WTC11 (cell line): ENCODE measurements at regions of chr19 and their contacts with region 1.

Region 1: GRCh38 chr19:45125926-45126493 is 33.0 kb downstream of the PPP1R37 start:
- DNase-seq: peak; percentile 90
- ATAC-seq: peak; percentile 93
- H3K4me3 Mint-ChIP-seq: no peak overlapping the region
- H3K27ac Mint-ChIP-seq: peak overlapping the region; percentile 19; the same call in 1 of the 2 replicates
- H3K4me1 Mint-ChIP-seq: peaks cover 16% of the 10 kb centered on the region
- H3K27me3 Mint-ChIP-seq: no peaks in the 10 kb centered on the region
- CTCF ChIP-seq: peak; percentile 76

Region 2: DNA sequence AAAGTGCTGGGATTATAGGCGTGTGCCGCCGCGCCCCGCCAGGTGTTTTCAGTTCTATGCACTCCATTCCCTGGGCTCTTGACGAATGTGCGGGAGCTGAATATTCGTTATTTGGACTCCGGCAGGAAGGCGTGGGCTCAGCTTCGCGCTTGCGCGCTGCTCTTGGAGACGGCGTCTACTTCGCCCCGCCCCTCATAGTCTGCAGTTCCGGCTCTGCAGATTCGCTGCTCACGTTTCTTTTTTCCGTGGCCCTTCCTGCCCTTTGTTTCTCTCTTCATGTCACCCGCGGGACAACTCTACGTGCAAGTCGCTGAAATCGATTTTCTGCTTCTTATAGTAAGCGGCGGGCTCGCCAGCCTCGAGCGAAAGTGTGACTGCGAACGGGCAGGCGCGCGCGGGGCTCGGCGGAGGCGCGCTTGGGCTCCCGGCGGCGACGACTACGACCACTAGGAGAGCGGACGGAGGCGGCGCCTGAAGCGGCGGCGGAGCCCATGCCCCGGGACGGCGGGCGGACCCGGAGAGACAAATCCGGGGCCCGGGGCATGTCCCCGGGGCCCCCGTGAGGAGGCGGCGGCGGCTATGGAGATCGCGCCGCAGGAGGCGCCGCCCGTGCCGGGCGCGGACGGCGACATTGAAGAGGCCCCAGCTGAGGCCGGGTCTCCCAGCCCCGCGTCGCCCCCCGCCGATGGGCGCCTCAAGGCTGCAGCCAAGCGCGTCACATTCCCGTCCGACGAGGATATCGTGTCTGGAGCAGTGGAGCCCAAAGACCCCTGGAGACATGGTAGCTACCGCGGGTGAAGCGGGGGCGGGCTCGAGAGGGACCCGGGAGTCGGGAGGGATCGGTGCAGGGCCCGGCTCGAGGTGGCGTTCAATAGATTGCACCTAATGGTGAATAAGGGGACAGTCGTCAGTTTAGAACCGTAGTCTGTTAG is 33.0 kb before region 1 on chr19 and contains the start of gene PPP1R37:
- CTCF ChIA-PET with region 1: interaction called, 14 read pairs
- POLR2A ChIA-PET with region 1: no interaction called
- DNase-seq: peak; percentile 93
- ATAC-seq: peak; percentile 52
- H3K4me3 Mint-ChIP-seq: peak within 1 kb of the TSS; percentile 84
- H3K27ac Mint-ChIP-seq: peak within 1 kb of the TSS; percentile 100
- H3K4me1 Mint-ChIP-seq: peaks cover 57% of the 10 kb centered on the region
- H3K27me3 Mint-ChIP-seq: no peaks in the 10 kb centered on the region
- CTCF ChIP-seq: no peak
- total RNA-seq, gene PPP1R37: 34.5 to 35.9 TPM (median 35.4 TPM) in 3 replicates

Region 3: GRCh38 chr19:45113616-45114015 is 12.4 kb before region 1 on chr19:
- CTCF ChIA-PET with region 1: interaction called, 17 read pairs
- POLR2A ChIA-PET with region 1: no interaction called
- DNase-seq: no peak
- ATAC-seq: no peak
- H3K4me3 Mint-ChIP-seq: no peak overlapping the region
- H3K27ac Mint-ChIP-seq: peak overlapping the region; percentile 36; the same call in 1 of the 2 replicates
- H3K4me1 Mint-ChIP-seq: peaks cover 10% of the 10 kb centered on the region; the same call in 1 of the 2 replicates
- H3K27me3 Mint-ChIP-seq: no peaks in the 10 kb centered on the region
- CTCF ChIP-seq: no peak

Region 4: DNA sequence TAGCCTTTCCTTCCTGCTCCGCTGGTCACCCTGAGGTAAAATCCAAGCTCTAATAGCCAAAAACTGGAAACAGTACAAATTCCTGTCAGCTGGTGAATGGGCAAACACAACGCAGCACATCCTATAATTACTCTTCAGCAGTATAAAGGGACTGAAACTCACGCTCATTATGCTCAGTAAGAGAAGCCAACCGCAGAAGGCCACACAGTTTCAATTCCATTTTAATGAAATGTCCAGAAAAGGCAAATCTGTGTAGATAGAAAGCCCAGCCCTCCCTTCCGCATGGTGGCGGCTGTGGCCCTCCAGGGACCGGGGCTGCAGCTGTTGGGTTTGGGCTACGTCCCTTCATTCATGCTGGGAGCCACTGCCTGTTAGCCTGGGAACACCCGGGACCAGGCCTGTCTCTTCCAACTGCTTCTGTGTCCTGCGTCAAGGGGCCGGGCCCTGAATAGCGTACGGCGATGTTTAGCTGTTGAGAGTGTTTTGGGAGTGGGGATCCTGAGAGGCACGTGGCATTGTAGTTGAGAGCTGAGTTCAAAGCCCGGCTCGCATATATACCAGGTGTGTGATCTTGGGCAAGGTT is 11.3 kb after region 1 on chr19:
- CTCF ChIA-PET with region 1: interaction called, 19 read pairs
- POLR2A ChIA-PET with region 1: no interaction called
- DNase-seq: no peak
- ATAC-seq: no peak
- H3K4me3 Mint-ChIP-seq: no peak overlapping the region
- H3K27ac Mint-ChIP-seq: peak overlapping the region; percentile 86
- H3K4me1 Mint-ChIP-seq: peaks cover 31% of the 10 kb centered on the region
- H3K27me3 Mint-ChIP-seq: no peaks in the 10 kb centered on the region
- CTCF ChIP-seq: no peak

Region 5: GRCh38 chr19:45146251-45146650 is 20.2 kb after region 1 on chr19:
- CTCF ChIA-PET with region 1: interaction called, 14 read pairs
- POLR2A ChIA-PET with region 1: no interaction called
- DNase-seq: no peak
- ATAC-seq: no peak
- H3K4me3 Mint-ChIP-seq: no peak overlapping the region
- H3K27ac Mint-ChIP-seq: no peak overlapping the region
- H3K4me1 Mint-ChIP-seq: no peaks in the 10 kb centered on the region
- H3K27me3 Mint-ChIP-seq: peaks cover 3% of the 10 kb centered on the region
- CTCF ChIP-seq: no peak

Region 6: DNA sequence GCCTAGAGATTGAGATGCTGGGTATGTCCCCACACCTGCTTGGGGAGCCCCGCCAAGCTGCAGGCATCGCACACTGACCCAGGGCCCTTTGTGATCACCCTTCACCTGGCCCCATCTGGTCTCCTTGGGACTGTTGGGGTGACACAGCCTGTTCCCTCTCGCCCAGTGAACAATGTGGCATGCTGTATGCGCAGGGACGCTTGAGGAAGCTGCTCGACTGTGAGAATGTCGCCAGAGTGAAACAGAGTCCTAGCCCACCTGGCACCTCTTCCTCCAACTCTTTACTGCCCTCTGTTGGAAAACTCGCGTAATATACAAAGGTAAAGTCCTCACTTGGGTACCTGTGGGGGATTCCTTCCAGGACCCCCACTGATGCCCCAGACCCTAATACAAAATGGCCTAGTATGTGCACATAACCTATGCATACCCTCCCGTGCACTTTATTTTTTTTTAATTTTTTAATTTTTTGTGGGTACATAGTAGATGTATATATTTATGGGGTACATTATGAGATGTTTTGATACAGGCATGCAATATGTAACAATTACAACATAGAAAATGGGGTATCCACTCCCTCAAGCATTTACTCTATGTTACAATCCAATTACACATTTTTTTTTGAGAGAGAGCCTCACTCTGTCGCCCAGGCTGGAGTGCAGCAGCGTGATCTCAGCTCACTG is 61.6 kb after region 1 on chr19:
- CTCF ChIA-PET with region 1: interaction called, 10 read pairs
- POLR2A ChIA-PET with region 1: no interaction called
- DNase-seq: peak; percentile 46
- ATAC-seq: peak; percentile 90
- H3K4me3 Mint-ChIP-seq: no peak overlapping the region
- H3K27ac Mint-ChIP-seq: no peak overlapping the region
- H3K4me1 Mint-ChIP-seq: no peaks in the 10 kb centered on the region
- H3K27me3 Mint-ChIP-seq: peaks cover 9% of the 10 kb centered on the region; the same call in 1 of the 2 replicates
- CTCF ChIP-seq: peak; percentile 75